Right cardiac atrium (tissue), 5 donors: ENCODE measurements at regions of chr11 and their contacts with region 1.

Region 1: DNA sequence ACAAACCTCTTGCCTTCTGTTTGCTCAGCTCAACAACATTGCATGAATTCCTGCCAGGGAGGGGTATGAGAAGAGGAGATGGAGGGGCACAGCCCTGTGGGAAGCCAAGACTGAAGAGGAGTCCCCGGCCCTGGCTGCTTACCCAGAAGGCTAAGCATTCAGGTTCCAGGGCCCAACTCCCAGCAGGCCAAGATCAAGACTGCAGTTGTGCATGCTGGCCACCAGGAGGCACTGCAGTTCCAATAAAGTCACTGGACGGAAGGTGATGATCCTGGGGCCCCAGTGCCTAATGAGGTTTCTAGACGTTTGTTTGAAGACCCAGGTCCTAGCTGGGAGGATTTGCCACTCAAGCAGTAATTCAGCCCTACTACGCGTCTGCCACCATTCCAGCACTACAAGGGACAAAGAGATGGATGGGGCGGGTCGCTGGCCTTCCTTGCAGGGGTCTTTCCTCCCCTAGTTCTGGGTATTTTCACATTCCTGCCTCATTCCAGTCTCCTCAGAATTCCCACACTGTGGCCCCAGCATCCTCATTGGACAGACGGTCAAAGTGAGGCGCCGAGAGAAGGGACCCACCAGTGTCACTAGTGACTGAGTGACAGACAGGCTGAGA is 23.6 kb downstream of the ALX4 start:
- DNase-seq: peak in 2 of 3 donors; percentile 49 to 70
- ATAC-seq: peak in 1 of 2 donors; percentile 78
- H3K4me3 ChIP-seq: no peak overlapping the region
- H3K27ac ChIP-seq: no peak overlapping the region
- H3K4me1 ChIP-seq: no peaks in the 10 kb centered on the region
- H3K27me3 ChIP-seq: no peaks in the 10 kb centered on the region

Region 2: DNA sequence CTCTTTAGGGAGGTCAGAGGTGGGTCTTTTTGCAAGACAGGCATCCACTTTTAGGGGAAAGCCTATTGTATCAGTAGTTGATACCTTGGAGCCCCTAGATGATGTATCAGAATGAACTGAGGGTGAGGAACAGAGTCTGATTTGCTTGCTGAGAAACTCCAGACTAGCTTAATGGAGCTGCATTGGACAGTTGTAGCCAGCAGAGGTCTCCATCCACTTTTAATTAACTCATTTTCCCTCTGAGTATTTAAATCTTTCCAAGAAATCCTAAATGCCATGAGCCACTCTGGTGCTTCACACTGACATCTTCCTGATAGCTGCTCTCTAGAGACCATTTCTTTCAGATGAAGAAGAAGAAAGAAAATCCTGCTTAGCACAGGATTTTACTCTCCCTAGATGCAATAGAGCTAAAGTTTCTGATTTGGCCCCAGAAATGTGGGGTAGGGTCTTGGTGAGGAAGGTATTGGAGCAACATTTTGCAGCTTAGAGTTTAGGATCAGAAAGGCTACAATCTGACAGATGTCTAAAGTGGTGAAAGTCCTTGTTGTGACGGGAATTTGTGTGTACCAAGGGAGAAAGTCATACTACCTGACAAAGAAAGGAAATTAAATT is 152.9 kb before region 1 on chr11:
- intact Hi-C with region 1: loop called in 1 of 4 experiments (anchors 10 kb)
- DNase-seq: no peak
- ATAC-seq: no peak
- H3K4me3 ChIP-seq: no peak overlapping the region
- H3K27ac ChIP-seq: no peak overlapping the region
- H3K4me1 ChIP-seq: no peaks in the 10 kb centered on the region
- H3K27me3 ChIP-seq: no peaks in the 10 kb centered on the region

Region 3: DNA sequence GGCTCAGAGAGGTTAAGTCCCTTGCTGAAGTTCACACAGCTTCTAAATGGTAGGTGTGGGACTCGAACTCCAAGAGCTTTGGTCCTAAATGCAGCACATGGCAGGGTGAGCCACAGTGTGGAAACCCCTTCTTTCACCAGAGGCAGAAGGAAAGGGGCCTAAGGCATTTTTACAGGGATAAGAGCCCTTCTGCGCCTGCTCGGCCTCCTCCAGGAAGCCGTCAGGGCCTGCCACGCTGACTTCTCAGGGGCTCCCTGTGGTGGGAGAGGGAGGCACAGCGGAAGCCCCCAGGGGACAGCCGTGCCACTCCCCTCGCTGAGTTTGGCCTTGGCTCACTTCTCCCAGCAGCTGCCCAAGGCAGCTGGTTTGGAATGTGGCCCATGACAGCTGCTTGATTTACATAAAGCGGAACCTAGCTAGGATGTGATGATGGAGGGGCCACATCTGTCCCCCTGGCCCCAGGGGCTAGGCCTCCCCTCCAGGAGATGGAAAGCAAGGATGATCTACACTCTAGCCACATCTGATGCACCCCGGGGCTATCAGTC is 314.5 kb after region 1 on chr11:
- intact Hi-C with region 1: loop called in 1 of 4 experiments (anchors 10 kb)
- DNase-seq: peak; percentile 50 to 75 (median 67)
- ATAC-seq: peak; percentile 2 to 7
- H3K4me3 ChIP-seq: no peak overlapping the region
- H3K27ac ChIP-seq: no peak overlapping the region
- H3K4me1 ChIP-seq: peaks cover 9% of the 10 kb centered on the region
- H3K27me3 ChIP-seq: no peaks in the 10 kb centered on the region